ENCODE measurements at regions of chr5 and their contacts with region 1.

Region 1: GRCh38 chr5:81292130-81292529 is 9.3 kb upstream of the ZCCHC9 start:
- DNase-seq: no peak
- H3K4me3 ChIP-seq: no peak overlapping the region
- H3K27ac ChIP-seq: no peak overlapping the region
- H3K4me1 ChIP-seq: no peaks in the 10 kb centered on the region
- H3K27me3 ChIP-seq: no peaks in the 10 kb centered on the region
- CTCF ChIP-seq: no peak
- EP300 ChIP-seq: no peak
- POLR2A ChIP-seq: no peak

Region 2: DNA sequence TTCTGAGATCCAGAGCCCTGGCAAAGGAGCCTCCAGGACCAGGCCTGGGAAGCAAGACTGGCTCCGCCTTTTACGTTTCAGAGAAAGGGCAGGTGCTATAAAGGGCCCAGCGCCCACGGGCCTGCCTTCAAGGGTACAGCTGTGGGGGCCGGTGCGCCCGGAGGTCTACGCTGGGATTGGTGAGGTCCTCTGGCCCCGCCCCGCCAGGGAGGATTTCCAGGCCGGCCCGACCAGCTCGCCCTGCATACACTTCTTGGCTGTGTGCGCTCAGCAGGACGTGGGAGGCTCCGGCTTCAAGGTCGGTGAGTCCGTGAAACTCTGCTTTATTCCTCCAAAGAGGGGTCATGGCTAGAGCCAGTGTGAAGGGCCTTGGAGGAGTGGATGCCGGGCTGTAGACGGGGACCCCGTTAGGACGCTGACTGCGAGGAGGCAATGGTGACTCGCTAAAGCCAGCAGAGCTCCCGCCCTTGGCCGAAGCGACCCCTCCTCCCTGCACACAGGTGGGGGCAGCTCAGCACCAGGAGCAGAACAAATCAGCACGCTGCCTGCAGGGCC is 59.0 kb before region 1 on chr5 and contains the start of gene CKMT2:
- intact Hi-C with region 1: loop called in 1 of 4 experiments (anchors 10 kb)
- DNase-seq: peak; percentile 91 to 96 (median 94)
- H3K4me3 ChIP-seq: peak within 1 kb of the TSS; percentile 37
- H3K27ac ChIP-seq: peak within 1 kb of the TSS; percentile 73 to 90
- H3K4me1 ChIP-seq: peaks cover 24% of the 10 kb centered on the region
- H3K27me3 ChIP-seq: no peaks in the 10 kb centered on the region
- CTCF ChIP-seq: no peak
- EP300 ChIP-seq: no peak
- POLR2A ChIP-seq: peak; percentile 22
- total RNA-seq, gene CKMT2: 6.2 to 28.3 (median 13.0) TPM

Region 3: DNA sequence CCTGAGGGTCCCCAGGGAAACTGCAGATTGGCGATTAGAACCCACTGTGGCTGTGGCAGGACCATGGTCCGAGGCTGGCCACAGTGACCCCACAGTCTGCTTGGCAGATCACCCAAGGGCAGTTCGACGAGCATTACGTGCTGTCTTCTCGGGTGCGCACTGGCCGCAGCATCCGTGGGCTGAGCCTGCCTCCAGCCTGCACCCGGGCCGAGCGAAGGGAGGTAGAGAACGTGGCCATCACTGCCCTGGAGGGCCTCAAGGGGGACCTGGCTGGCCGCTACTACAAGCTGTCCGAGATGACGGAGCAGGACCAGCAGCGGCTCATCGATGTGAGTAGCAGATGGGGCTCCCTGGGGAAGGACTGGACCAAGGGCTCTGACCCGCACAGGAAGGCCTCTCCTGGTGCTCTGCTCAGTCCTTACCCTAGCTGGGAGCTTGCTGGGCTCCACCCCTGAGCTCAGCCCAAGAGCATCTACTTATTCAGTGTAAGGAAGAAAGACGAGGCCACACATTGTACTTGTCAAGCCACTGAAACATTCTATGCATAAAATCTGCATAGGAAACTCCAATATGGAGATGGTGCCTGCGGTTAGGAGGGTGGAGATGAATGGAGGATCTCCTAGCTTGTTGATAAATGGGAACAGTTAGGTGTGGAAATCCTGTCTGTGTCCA is 37.1 kb before region 1 on chr5:
- intact Hi-C with region 1: loop called in 1 of 4 experiments (anchors 5 kb)
- DNase-seq: no peak
- H3K4me3 ChIP-seq: no peak overlapping the region
- H3K27ac ChIP-seq: no peak overlapping the region
- H3K4me1 ChIP-seq: no peaks in the 10 kb centered on the region
- H3K27me3 ChIP-seq: no peaks in the 10 kb centered on the region
- CTCF ChIP-seq: no peak
- EP300 ChIP-seq: no peak
- POLR2A ChIP-seq: no peak